Panc1 (cell line): ENCODE measurements at regions of chr5 and their contacts with region 1.

Region 1: DNA sequence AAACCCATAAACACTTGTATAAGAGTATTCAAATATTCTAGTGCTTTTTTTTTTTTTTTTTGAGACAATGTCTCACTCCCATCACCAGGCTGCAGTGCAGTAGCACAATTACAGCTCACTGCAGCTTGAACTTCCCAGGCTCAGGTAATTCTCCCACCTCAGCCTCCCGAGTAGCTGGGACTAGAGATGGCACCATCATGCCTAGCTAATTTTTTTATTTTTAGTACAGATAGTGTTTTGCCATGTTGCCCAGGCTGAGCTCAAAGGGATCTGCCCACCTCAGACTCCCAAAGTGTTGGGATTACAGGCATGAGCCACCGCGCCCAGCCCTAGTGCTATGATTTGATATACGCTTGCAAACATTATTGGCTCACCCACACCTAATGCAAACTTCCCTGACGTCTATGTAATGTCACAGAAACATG is 11.8 kb downstream of the IL6ST start:
- DNase-seq: no peak
- ATAC-seq: peak; percentile 68; the same call in 1 of the 2 replicates
- H3K4me3 ChIP-seq: no peak overlapping the region
- H3K27ac ChIP-seq: no peak overlapping the region
- H3K4me1 ChIP-seq: peaks cover 2% of the 10 kb centered on the region
- H3K27me3 ChIP-seq: no peaks in the 10 kb centered on the region
- CTCF ChIP-seq: peak; percentile 42

Region 2: DNA sequence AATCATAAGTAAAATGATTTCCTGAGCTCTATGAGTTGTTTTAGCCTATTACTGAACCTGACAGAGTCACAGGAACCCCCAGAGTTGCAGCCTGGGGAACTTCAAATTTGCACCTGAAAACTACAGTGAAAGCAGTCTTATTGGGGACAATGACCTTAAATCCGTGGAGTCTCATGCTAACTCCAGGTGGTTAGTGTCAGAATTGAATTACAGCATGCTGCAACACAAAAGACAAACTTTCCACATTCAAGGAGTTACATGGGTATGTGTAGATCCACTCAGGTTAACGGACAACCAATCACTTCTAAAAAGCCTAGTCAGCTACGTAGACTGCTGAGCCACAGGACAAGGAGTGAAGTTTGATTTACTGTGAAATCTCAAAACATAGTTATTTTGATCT is 497.9 kb before region 1 on chr5:
- CTCF ChIA-PET with region 1: no interaction called
- POLR2A ChIA-PET with region 1: no interaction called
- in situ Hi-C with region 1: no loop called
- intact Hi-C with region 1: no loop called
- DNase-seq: no peak
- ATAC-seq: no peak
- H3K4me3 ChIP-seq: no peak overlapping the region
- H3K27ac ChIP-seq: no peak overlapping the region
- H3K4me1 ChIP-seq: no peaks in the 10 kb centered on the region
- H3K27me3 ChIP-seq: no peaks in the 10 kb centered on the region
- CTCF ChIP-seq: no peak

Region 3: GRCh38 chr5:55994574-55995333 is 11.8 kb after region 1 on chr5 and contains the start of gene IL6ST:
- CTCF ChIA-PET with region 1: interaction called, 14 read pairs
- POLR2A ChIA-PET with region 1: interaction called, 3 read pairs
- in situ Hi-C with region 1: no loop called
- intact Hi-C with region 1: no loop called
- DNase-seq: peak; percentile 76
- ATAC-seq: peak; percentile 97
- H3K4me3 ChIP-seq: peak within 1 kb of the TSS; percentile 92 to 96
- H3K27ac ChIP-seq: peak within 1 kb of the TSS; percentile 98
- H3K4me1 ChIP-seq: peaks cover 35% of the 10 kb centered on the region
- H3K27me3 ChIP-seq: no peaks in the 10 kb centered on the region
- CTCF ChIP-seq: 0 out of 2 replicates have a peak, but pooled peaks have one; percentile 21
- total RNA-seq, gene IL6ST: 181 TPM